ENCODE measurements at regions of chr22 and their contacts with region 1.

Region 1: GRCh38 chr22:39240828-39241793 is 3.7 kb downstream of the PDGFB start:
- DNase-seq: peak; percentile 82
- H3K4me3 Mint-ChIP-seq: peak overlapping the region; percentile 85
- H3K27ac Mint-ChIP-seq: peak overlapping the region; percentile 88
- H3K4me1 Mint-ChIP-seq: peaks cover 58% of the 10 kb centered on the region
- H3K27me3 Mint-ChIP-seq: peaks cover 13% of the 10 kb centered on the region

Region 2: DNA sequence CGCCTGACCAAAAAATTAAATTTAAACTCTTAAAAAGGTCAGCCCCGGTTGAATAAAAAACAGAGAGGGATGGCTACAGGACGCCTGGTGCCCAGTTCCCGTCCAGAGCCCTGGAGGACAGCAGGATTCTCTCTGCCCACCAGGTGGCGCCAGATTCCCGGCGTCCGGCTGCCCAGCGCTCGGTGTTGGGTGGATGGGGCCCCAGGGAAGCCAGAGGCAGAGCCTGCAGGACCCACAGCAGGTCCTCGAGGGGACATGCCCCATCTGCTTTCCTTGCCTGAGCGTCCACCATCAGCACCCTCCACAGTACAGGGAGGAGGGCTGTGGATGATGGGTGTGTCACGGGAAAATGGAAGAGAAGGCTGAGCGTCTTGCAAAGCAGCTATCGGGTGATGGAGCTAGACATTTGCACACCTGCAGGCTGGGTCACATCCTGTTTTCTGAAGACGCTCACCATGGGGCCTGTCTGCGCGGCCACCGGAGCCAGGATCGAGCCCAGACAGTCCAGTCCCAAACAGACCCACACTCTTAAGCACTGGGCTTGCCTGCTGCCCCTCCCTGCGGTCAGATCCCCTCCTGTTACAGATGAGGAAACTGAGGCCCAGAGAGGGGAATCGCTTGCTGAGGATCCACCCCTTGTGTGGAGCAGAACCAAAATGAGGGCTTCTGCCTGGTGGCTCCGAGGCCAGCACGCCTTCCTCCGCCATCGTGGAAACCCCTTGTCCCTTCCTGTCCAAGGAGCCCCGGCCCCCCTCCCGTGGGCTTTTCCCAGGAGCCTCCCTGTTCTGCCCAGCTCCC is 70.1 kb before region 1 on chr22:
- CTCF ChIA-PET with region 1: interaction called, 10 read pairs
- POLR2A ChIA-PET with region 1: no interaction called
- intact Hi-C with region 1: no loop called
- DNase-seq: peak; percentile 91
- H3K4me3 Mint-ChIP-seq: peak overlapping the region; percentile 37
- H3K27ac Mint-ChIP-seq: peak overlapping the region; percentile 43
- H3K4me1 Mint-ChIP-seq: peaks cover 40% of the 10 kb centered on the region
- H3K27me3 Mint-ChIP-seq: peaks cover 1% of the 10 kb centered on the region

Region 3: DNA sequence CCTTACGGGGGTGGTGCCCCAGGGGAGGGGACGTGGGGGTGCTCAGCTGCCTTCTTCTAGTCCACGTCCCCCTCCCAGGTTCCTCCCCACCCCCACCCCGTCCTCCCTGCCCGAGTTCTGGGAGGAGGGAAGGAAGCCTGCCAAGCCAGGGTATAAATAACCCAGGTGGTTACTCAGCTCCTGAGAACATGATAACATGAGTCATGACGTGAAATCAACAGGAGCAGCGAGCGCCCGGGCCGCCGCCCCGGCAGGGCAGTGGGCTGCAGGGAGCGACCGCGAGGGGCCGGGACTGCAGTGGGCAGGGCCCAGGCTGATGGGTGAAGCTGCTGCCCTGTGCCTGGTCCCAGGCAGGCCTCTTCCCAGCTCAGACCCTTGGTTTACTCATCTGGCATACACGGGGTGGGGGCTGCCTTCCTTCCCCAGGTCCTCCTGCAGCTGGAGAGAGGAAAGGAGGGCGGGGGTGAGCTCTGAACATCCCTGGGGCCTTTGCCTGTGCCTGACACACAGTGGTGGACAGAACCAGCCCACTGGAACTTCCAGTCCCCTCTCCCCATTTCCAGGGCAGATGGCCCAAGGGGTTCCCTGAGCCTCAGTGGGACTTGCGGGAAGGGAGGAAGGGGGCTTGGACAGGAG is 12.4 kb after region 1 on chr22:
- CTCF ChIA-PET with region 1: no interaction called
- POLR2A ChIA-PET with region 1: no interaction called
- intact Hi-C with region 1: loop called (anchors 1 kb)
- DNase-seq: peak; percentile 74
- H3K4me3 Mint-ChIP-seq: no peak overlapping the region
- H3K27ac Mint-ChIP-seq: no peak overlapping the region
- H3K4me1 Mint-ChIP-seq: peaks cover 29% of the 10 kb centered on the region
- H3K27me3 Mint-ChIP-seq: peaks cover 4% of the 10 kb centered on the region

Region 4: DNA sequence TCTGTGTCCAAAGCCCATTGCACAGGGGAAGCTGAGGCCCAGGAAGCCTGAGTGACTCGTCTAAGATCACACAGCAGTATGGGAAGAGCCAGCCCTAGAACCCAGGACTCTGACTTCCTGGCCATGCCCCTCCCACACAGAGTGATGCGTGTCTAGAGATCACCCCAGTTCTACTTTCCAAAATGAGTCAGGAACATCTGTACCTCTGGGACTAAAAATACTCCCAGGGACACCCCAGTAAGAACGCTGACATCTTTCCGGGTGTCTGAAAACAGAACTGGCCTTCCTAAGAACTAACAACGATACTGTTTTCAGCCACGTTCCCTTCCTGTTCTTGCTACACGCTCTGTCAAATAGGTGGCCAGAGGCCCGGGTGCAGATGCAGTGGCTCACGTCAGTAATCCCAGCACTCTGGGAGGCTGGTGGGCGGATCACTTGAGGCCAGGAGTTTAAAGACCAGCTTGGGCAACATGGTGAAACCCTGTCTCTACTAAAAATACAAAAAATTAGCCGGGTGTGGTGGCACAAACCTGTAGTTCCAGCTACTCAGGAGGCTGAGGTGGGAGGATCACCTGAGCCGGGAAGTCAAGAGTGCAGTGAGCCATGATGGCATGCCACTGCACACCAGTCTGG is 25.4 kb after region 1 on chr22:
- CTCF ChIA-PET with region 1: no interaction called
- POLR2A ChIA-PET with region 1: no interaction called
- intact Hi-C with region 1: loop called (anchors 2 kb)
- DNase-seq: peak; percentile 86
- H3K4me3 Mint-ChIP-seq: no peak overlapping the region
- H3K27ac Mint-ChIP-seq: peak overlapping the region; percentile 82
- H3K4me1 Mint-ChIP-seq: peaks cover 26% of the 10 kb centered on the region
- H3K27me3 Mint-ChIP-seq: peaks cover 3% of the 10 kb centered on the region

Region 5: DNA sequence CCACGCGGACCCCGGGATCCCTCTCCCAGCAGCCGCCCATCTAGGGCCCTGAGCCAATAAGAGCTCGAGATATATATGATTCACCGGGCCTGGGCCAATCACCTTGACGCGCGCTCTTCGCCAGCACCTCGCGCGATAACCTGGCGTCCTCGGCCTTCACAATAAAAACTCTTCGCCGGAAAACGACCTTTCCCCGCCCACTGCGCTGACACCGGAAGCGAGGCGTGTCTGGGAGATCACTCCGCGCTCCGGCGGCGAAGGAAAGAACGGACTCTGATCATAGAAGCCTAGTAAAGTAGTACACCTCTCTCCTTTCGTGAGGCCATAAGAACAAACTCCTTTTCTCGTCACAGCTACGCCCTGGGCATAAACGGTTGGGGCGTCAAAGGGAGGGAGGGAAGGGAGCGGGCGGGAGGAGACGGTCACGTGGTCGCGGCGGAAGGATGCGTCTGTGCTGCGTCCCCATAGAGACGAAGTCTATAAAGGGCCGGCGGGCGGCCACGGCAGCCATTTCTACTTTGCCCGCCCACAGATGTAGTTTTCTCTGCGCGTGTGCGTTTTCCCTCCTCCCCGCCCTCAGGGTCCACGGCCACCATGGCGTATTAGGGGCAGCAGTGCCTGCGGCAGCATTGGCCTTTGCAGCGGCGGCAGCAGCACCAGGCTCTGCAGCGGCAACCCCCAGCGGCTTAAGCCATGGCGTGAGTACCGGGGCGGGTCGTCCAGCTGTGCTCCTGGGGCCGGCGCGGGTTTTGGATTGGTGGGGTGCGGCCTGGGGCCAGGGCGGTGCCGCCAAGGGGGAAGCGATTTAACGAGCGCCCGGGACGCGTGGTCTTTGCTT is 279.2 kb after region 1 on chr22 and contains the start of gene ATF4:
- CTCF ChIA-PET with region 1: no interaction called
- POLR2A ChIA-PET with region 1: no interaction called
- intact Hi-C with region 1: loop called (anchors 10 kb)
- DNase-seq: peak; percentile 98
- H3K4me3 Mint-ChIP-seq: peak within 1 kb of the TSS; percentile 84
- H3K27ac Mint-ChIP-seq: peak within 1 kb of the TSS; percentile 98
- H3K4me1 Mint-ChIP-seq: peaks cover 50% of the 10 kb centered on the region
- H3K27me3 Mint-ChIP-seq: peaks cover 4% of the 10 kb centered on the region
- total RNA-seq, gene ATF4: 437 to 455 TPM

Measured in activated CD4-positive, alpha-beta memory T cell treated with anti-CD3 and anti-CD28 coated beads for 36 hours (primary cell).